ENCODE measurements at regions of chr6 and their contacts with region 1.

Region 1: DNA sequence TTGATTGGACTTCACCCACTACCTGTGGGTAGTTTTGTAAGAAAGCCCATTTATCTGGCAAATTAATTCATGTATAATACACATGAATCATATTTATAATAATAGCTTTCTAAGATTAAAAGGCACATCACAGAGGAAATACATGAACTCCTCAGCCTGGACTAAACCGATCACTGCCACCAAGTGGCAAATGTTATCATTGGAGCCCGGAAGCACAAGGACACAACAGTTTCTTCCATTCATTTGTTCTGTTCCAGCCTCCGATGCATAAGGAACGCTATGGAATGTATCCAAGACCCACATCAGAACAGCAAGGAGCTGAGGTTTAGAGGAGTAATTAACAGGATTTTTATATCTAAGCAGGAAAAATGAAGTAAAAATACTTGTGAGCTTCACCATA is 13.9 kb upstream of the IPCEF1 start:
- DNase-seq: no peak
- ATAC-seq: no peak
- H3K4me3 Mint-ChIP-seq: no peak overlapping the region
- H3K27ac Mint-ChIP-seq: no peak overlapping the region
- H3K4me1 Mint-ChIP-seq: no peaks in the 10 kb centered on the region
- H3K27me3 Mint-ChIP-seq: peaks cover 4% of the 10 kb centered on the region
- CTCF ChIP-seq: no peak

Region 2: GRCh38 chr6:154276810-154277628 is 93.5 kb before region 1 on chr6:
- CTCF ChIA-PET with region 1: interaction called, 10 read pairs
- POLR2A ChIA-PET with region 1: no interaction called
- intact Hi-C with region 1: loop called (anchors 1 kb)
- DNase-seq: no peak
- ATAC-seq: peak; percentile 47
- H3K4me3 Mint-ChIP-seq: peak overlapping the region; percentile 11
- H3K27ac Mint-ChIP-seq: no peak overlapping the region
- H3K4me1 Mint-ChIP-seq: peaks cover 11% of the 10 kb centered on the region
- H3K27me3 Mint-ChIP-seq: peaks cover 2% of the 10 kb centered on the region
- CTCF ChIP-seq: no peak